Activated naive CD4-positive, alpha-beta T cell treated with anti-CD3 and anti-CD28 coated beads for 36 hours (primary cell): ENCODE measurements at regions of chr17 and their contacts with region 1.

Region 1: DNA sequence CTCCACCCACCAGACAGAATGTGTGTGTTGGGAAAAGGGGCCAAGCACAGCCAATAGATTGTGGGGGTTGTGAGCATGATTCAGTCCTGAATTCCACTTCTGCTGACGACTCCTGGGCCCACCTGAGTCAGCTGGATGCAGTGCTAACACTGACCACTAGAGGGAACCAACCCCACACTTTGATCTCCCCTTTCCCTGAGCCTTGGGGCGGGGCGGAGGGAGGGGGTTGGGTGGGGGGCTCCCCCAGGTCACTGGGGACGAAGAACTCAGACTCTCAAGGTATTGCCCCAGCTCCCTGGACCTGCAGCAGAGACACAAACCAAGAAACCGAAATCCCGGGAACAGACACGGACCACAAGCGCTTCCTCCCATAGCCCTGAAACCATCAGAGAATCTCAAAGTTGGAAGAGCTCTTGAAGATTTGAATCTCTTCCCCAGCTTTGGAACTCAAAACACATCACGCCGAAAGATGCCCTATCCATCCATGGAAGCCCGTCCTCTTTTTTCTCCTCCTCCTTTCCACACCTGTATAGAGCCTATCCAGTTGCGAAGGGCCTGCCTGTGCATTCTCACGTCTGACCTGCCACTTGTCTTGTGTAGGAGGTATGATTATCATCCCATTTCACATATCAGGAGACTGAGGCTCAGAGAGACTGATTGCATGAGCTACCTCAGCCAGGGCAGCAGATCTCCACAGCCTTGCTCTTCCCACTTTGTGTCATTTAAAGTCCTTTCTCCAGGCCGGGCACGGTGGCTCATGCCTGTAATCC is 784 bp upstream of the CSHL1 start:
- DNase-seq: peak; percentile 74
- H3K4me3 Mint-ChIP-seq: no peak overlapping the region
- H3K27ac Mint-ChIP-seq: no peak overlapping the region
- H3K4me1 Mint-ChIP-seq: no peaks in the 10 kb centered on the region
- H3K27me3 Mint-ChIP-seq: no peaks in the 10 kb centered on the region

Region 2: DNA sequence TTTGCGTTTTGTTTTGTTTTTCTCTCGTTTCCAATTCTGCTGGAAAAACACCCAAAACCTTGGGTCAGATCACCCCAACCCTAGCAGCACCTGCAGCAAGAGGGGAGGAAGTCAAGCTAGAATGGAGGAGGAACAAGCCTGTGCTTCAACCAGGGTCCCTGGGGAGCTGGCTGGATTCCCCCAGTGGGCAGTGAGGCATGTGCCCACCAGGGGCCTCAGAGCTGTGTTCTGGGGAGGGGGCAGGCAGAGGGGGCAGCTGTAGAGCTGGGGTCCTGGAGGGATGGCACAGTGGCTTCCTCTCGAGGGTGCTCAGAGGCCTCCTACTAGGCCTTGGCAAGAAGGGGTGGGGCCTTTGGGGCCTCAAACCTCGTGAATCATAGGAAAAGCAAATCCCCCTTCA is 13.8 kb after region 1 on chr17:
- CTCF ChIA-PET with region 1: interaction called, 50 read pairs
- intact Hi-C with region 1: no loop called
- DNase-seq: no peak
- H3K4me3 Mint-ChIP-seq: no peak overlapping the region
- H3K27ac Mint-ChIP-seq: no peak overlapping the region
- H3K4me1 Mint-ChIP-seq: peaks cover under 1% of the 10 kb centered on the region
- H3K27me3 Mint-ChIP-seq: no peaks in the 10 kb centered on the region

Region 3: DNA sequence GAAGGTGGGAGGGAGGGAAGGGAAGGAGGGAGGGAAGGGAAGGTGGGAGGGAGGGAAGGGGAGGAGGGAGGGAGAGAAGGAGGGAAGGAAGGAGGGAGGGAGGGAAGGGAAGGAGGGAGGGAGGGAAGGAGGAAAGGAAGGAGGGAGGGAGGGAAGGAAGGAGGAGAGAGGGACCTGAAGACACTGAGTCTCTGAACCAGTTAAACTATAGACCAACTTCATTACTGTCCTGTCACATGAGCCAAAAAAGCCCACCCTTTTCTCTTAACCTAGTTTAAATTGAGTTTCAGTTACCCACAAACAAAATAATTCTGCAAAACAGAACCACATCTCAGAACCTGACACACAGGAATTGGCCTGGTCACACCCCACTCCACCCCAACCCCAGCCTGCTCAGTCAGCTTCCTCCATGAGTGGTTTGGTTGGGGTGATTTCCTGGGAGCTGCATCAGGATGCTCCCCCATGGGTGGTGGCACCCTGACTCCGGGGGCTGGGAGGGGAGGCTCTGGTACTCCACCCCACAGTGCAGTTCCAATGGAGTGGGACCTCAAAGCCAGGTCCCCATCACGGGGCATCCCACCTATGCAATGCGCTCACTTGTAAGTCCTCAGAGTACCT is 81.6 kb after region 1 on chr17:
- CTCF ChIA-PET with region 1: interaction called, 10 read pairs
- intact Hi-C with region 1: no loop called
- DNase-seq: no peak
- H3K4me3 Mint-ChIP-seq: no peak overlapping the region
- H3K27ac Mint-ChIP-seq: no peak overlapping the region
- H3K4me1 Mint-ChIP-seq: peaks cover 29% of the 10 kb centered on the region
- H3K27me3 Mint-ChIP-seq: no peaks in the 10 kb centered on the region